HEK293 (cell line): ENCODE measurements at regions of chr11 and their contacts with region 1.

Region 1: GRCh38 chr11:129117595-129118350 is 74.4 kb downstream of the ARHGAP32 start:
- H3K4me3 ChIP-seq: no peak overlapping the region
- H3K27ac ChIP-seq: no peak overlapping the region
- H3K4me1 ChIP-seq: no peaks in the 10 kb centered on the region
- CTCF ChIP-seq: peak; percentile 41; the same call in 1 of the 2 replicates

Region 2: GRCh38 chr11:129131316-129131715 is 13.5 kb after region 1 on chr11:
- CTCF ChIA-PET with region 1: interaction called, 12 read pairs
- POLR2A ChIA-PET with region 1: no interaction called
- H3K4me3 ChIP-seq: no peak overlapping the region
- H3K27ac ChIP-seq: no peak overlapping the region
- H3K4me1 ChIP-seq: no peaks in the 10 kb centered on the region
- CTCF ChIP-seq: no peak

Region 3: GRCh38 chr11:129234978-129235377 is 117.2 kb after region 1 on chr11:
- CTCF ChIA-PET with region 1: no interaction called
- POLR2A ChIA-PET with region 1: no interaction called
- H3K4me3 ChIP-seq: no peak overlapping the region
- H3K27ac ChIP-seq: no peak overlapping the region
- H3K4me1 ChIP-seq: no peaks in the 10 kb centered on the region
- CTCF ChIP-seq: no peak

Region 4: GRCh38 chr11:129331871-129332274 is 214.1 kb after region 1 on chr11:
- CTCF ChIA-PET with region 1: interaction called, 70 read pairs
- POLR2A ChIA-PET with region 1: no interaction called
- H3K4me3 ChIP-seq: no peak overlapping the region
- H3K27ac ChIP-seq: no peak overlapping the region
- H3K4me1 ChIP-seq: no peaks in the 10 kb centered on the region
- CTCF ChIP-seq: peak; percentile 65